CD14-positive monocyte (primary cell): ENCODE measurements at regions of chr17 and their contacts with region 1.

Region 1: GRCh38 chr17:65041518-65041917 is 15.0 kb downstream of the GNA13 start:
- DNase-seq: no peak
- H3K4me3 ChIP-seq: no peak overlapping the region
- H3K4me3 Mint-ChIP-seq: peak overlapping the region in 1 of 2 donors; percentile 33
- H3K27ac ChIP-seq: peak overlapping the region in 1 of 2 donors; percentile 63
- H3K27ac Mint-ChIP-seq: peak overlapping the region; percentile 18 to 86 (median 68)
- H3K4me1 ChIP-seq: peaks cover 8 to 14% of the 10 kb centered on the region in 2 donors
- H3K4me1 Mint-ChIP-seq: peaks cover 46% of the 10 kb centered on the region
- H3K27me3 ChIP-seq: no peaks in the 10 kb centered on the region
- H3K27me3 Mint-ChIP-seq: no peaks in the 10 kb centered on the region
- CTCF ChIP-seq: no peak

Region 2: DNA sequence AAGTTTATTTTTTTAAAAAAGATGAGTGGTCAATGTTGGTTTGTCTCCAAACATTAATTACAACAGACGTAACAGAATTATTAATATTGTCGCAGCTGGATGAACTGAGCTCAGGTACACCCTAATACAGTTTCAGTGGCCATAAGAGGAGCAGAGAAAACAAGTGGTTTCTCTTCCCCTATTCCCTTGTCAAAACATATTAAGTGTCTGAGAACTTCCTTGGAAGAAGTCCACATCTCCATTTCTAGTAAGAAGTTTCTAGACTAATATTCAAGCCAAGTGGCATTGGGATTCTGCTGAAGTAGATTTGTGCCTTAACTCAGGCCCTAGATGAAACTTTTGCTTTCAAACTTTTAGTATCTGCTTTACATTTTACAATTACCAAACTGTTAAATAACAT is 32.6 kb before region 1 on chr17:
- intact Hi-C with region 1: loop called in 1 of 2 experiments (anchors 5 kb)
- DNase-seq: no peak
- H3K4me3 ChIP-seq: no peak overlapping the region
- H3K4me3 Mint-ChIP-seq: no peak overlapping the region
- H3K27ac ChIP-seq: peak overlapping the region in 1 of 2 donors; percentile 10
- H3K27ac Mint-ChIP-seq: no peak overlapping the region
- H3K4me1 ChIP-seq: peaks cover 0 to 6% of the 10 kb centered on the region in 2 donors
- H3K4me1 Mint-ChIP-seq: peaks cover 28% of the 10 kb centered on the region
- H3K27me3 ChIP-seq: no peaks in the 10 kb centered on the region
- H3K27me3 Mint-ChIP-seq: no peaks in the 10 kb centered on the region
- CTCF ChIP-seq: no peak

Region 3: GRCh38 chr17:65022751-65023700 is 18.5 kb before region 1 on chr17:
- intact Hi-C with region 1: no loop called
- DNase-seq: peak in 1 of 3 donors; percentile 19
- H3K4me3 ChIP-seq: no peak overlapping the region
- H3K4me3 Mint-ChIP-seq: no peak overlapping the region
- H3K27ac ChIP-seq: peak overlapping the region in 1 of 2 donors; percentile 72
- H3K27ac Mint-ChIP-seq: peak overlapping the region in 5 of 7 donors; percentile 3 to 70 (median 58)
- H3K4me1 ChIP-seq: peaks cover 34% of the 10 kb centered on the region in 2 donors
- H3K4me1 Mint-ChIP-seq: peaks cover 54% of the 10 kb centered on the region
- H3K27me3 ChIP-seq: no peaks in the 10 kb centered on the region
- H3K27me3 Mint-ChIP-seq: peaks cover 0 to 5% (median 0%) of the 10 kb centered on the region in 3 donors
- CTCF ChIP-seq: no peak